ENCODE measurements at regions of chr10 and their contacts with region 1.

Region 1: DNA sequence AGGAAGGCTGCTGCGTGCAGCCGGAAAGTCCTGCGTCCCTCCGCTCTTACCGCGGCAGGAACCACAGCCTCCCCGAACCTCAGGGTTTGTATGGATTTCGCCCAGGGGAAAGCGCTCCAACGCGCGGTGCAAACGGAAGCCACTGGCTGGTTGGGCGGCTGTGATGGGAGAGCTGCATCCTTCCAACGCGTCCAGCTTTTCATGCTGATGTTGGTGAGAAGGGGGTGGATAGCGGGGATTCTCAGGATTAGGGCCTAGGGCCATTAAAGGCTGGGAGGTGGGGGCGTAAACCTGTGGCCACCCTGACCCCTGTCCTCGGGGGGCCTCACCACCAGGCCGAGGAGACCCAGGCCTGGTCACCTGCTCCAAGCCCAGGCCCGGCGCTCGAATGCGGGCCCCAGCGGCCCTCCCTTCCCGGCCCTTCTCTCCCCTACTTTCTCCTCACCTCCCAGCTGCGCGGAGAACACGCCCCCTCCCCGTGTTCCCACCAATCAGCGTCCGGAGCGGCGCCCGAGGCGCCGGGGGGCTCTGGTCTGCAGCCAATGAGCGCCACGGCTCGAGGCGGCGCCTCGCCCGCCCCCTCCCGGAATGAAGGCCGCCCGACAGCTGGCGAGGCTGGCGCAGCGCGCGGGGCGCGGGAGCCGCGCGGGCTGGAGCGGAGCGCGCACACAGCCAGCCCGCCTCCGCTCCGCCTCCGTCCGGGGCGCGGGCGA is 458 bp upstream of the NANOS1 start:
- DNase-seq: peak; percentile 88 to 95
- H3K4me3 ChIP-seq: peak overlapping the region; percentile 34 to 59 (median 47)
- H3K27ac ChIP-seq: no peak overlapping the region
- H3K4me1 ChIP-seq: peaks cover 0 to 3% (median 1%) of the 10 kb centered on the region in 4 experiments; a peak in 4 of 7 replicates
- H3K27me3 ChIP-seq: no peaks in the 10 kb centered on the region
- CTCF ChIP-seq: peak; percentile 6 to 30 (median 6); a peak in 3 of 4 replicates
- EP300 ChIP-seq: no peak
- POLR2A ChIP-seq: 0 out of 3 replicates have a peak, but pooled peaks of 1 of the 2 experiments have one; percentile 46
- RAD21 ChIP-seq: peak in 1 of 2 experiments; percentile 22; a peak in 1 of 4 replicates

Region 2: GRCh38 chr10:118754720-118755480 is 274.2 kb before region 1 on chr10 and contains the start of gene CACUL1:
- CTCF ChIA-PET with region 1: no interaction called
- POLR2A ChIA-PET with region 1: interaction called, 13 read pairs
- DNase-seq: peak; percentile 99
- H3K4me3 ChIP-seq: peak within 1 kb of the TSS; percentile 84 to 97 (median 94)
- H3K27ac ChIP-seq: peak within 1 kb of the TSS; percentile 90
- H3K4me1 ChIP-seq: no peaks in the 10 kb centered on the region; a peak in 2 of 7 replicates
- H3K27me3 ChIP-seq: 0 out of 7 replicates have a peak, but pooled peaks cover 0 to under 1% (median 0%) of the 10 kb centered on the region in 4 experiments
- CTCF ChIP-seq: no peak
- EP300 ChIP-seq: no peak
- POLR2A ChIP-seq: peak; percentile 81 to 95
- RAD21 ChIP-seq: no peak
- total RNA-seq, gene CACUL1: 34.2 and 43.9 TPM in 2 replicates

Region 3: GRCh38 chr10:118875087-118875486 is 154.0 kb before region 1 on chr10:
- CTCF ChIA-PET with region 1: no interaction called
- POLR2A ChIA-PET with region 1: no interaction called
- DNase-seq: no peak
- H3K4me3 ChIP-seq: no peak overlapping the region
- H3K27ac ChIP-seq: no peak overlapping the region
- H3K4me1 ChIP-seq: peaks cover 0 to 3% (median 1%) of the 10 kb centered on the region in 4 experiments; a peak in 3 of 7 replicates
- H3K27me3 ChIP-seq: no peaks in the 10 kb centered on the region
- CTCF ChIP-seq: no peak
- EP300 ChIP-seq: no peak
- POLR2A ChIP-seq: no peak
- RAD21 ChIP-seq: no peak

Region 4: DNA sequence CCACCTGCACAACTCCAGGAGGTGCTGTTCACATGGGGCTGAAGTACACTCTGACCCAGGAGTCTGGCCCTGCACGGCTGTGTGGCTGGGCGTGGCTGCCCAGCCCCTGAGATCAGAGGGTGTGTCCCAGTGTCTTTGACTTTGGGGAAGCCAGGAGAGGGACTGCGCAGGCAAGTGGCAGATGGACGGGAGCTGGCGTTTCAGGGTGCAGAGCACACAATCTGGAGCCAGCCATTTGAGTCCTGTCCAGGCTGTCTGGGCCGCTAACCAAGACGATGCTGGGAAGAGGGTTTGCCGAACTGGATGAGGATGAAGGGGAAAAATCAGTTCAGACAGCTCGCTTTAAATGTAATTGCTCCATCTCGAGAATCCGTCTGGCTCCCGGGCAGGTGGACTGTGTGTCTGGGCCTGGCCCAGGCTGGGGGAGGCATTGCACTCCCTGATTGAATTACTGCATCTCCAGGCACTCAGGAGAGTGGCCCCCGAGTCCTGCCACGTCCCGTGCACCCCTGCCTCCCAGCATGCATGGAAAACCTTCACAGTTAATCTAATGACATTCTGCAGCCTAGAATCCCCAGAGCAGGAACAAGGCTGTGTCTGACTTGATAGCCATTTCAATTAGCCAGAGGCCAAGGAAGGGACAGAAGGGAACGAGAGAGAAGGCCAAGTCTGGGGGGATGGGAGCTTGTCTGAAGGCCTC is 120.3 kb before region 1 on chr10:
- CTCF ChIA-PET with region 1: no interaction called
- POLR2A ChIA-PET with region 1: no interaction called
- DNase-seq: no peak
- H3K4me3 ChIP-seq: no peak overlapping the region
- H3K27ac ChIP-seq: no peak overlapping the region
- H3K4me1 ChIP-seq: peaks cover 0 to under 1% (median 0%) of the 10 kb centered on the region in 4 experiments; a peak in 1 of 7 replicates
- H3K27me3 ChIP-seq: no peaks in the 10 kb centered on the region
- CTCF ChIP-seq: no peak
- EP300 ChIP-seq: no peak
- POLR2A ChIP-seq: no peak
- RAD21 ChIP-seq: no peak

Region 5: GRCh38 chr10:119001717-119002500 is 27.1 kb before region 1 on chr10:
- CTCF ChIA-PET with region 1: no interaction called
- POLR2A ChIA-PET with region 1: no interaction called
- DNase-seq: no peak
- H3K4me3 ChIP-seq: no peak overlapping the region
- H3K27ac ChIP-seq: no peak overlapping the region; the same call in 1 of the 2 replicates
- H3K4me1 ChIP-seq: no peaks in the 10 kb centered on the region; a peak in 1 of 7 replicates
- H3K27me3 ChIP-seq: no peaks in the 10 kb centered on the region
- CTCF ChIP-seq: no peak
- EP300 ChIP-seq: no peak
- POLR2A ChIP-seq: no peak
- RAD21 ChIP-seq: no peak

Region 6: DNA sequence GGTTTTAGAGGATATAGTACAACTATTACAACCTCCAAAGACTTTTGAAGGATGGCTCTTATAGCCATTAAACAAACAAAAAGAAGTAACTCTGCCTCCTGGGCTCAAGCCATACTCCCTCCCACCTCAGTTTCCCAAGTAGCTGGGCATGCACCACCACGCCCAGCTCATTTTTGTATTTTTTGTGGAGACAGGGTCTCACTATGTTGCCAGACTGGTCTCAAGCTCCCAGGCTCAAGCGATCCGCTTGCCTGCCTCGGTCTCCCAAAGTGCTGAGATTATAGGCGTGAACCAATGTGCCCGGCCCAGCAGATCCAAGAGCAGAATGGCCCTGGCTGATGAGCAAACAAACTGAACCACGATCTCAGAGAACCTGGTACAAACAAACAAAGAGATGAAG is 16.5 kb after region 1 on chr10:
- CTCF ChIA-PET with region 1: no interaction called
- POLR2A ChIA-PET with region 1: interaction called, 13 read pairs
- DNase-seq: no peak
- H3K4me3 ChIP-seq: no peak overlapping the region
- H3K27ac ChIP-seq: no peak overlapping the region
- H3K4me1 ChIP-seq: no peaks in the 10 kb centered on the region
- H3K27me3 ChIP-seq: no peaks in the 10 kb centered on the region
- CTCF ChIP-seq: no peak
- EP300 ChIP-seq: no peak
- POLR2A ChIP-seq: no peak
- RAD21 ChIP-seq: no peak

Region 7: GRCh38 chr10:119051775-119052174 is 22.7 kb after region 1 on chr10:
- CTCF ChIA-PET with region 1: no interaction called
- POLR2A ChIA-PET with region 1: interaction called, 13 read pairs
- DNase-seq: no peak
- H3K4me3 ChIP-seq: no peak overlapping the region
- H3K27ac ChIP-seq: no peak overlapping the region
- H3K4me1 ChIP-seq: no peaks in the 10 kb centered on the region
- H3K27me3 ChIP-seq: no peaks in the 10 kb centered on the region
- CTCF ChIP-seq: no peak
- EP300 ChIP-seq: no peak
- POLR2A ChIP-seq: peak in 1 of 2 experiments; percentile 33; a peak in 1 of 3 replicates
- RAD21 ChIP-seq: no peak

Region 8: GRCh38 chr10:119080521-119081260 is 51.6 kb after region 1 on chr10 and contains the start of gene EIF3A:
- CTCF ChIA-PET with region 1: no interaction called
- POLR2A ChIA-PET with region 1: interaction called, 30 read pairs
- DNase-seq: peak; percentile 71 to 94
- H3K4me3 ChIP-seq: peak within 1 kb of the TSS; percentile 77 to 96 (median 90)
- H3K27ac ChIP-seq: peak within 1 kb of the TSS; percentile 97
- H3K4me1 ChIP-seq: peaks cover 0 to 3% (median 0%) of the 10 kb centered on the region in 4 experiments; a peak in 2 of 7 replicates
- H3K27me3 ChIP-seq: no peaks in the 10 kb centered on the region
- CTCF ChIP-seq: no peak
- EP300 ChIP-seq: no peak
- POLR2A ChIP-seq: peak; percentile 93
- RAD21 ChIP-seq: no peak
- total RNA-seq, gene EIF3A: 209 and 210 TPM in 2 replicates

Region 9: GRCh38 chr10:119103903-119104652 is 75.0 kb after region 1 on chr10 and contains the start of gene DENND10:
- CTCF ChIA-PET with region 1: no interaction called
- POLR2A ChIA-PET with region 1: interaction called, 10 read pairs
- DNase-seq: peak; percentile 47 to 83
- H3K4me3 ChIP-seq: peak within 1 kb of the TSS; percentile 68 to 93 (median 88)
- H3K27ac ChIP-seq: peak within 1 kb of the TSS; percentile 58; the same call in 1 of the 2 replicates
- H3K4me1 ChIP-seq: peaks cover 0 to 3% (median 0%) of the 10 kb centered on the region in 4 experiments; a peak in 1 of 7 replicates
- H3K27me3 ChIP-seq: no peaks in the 10 kb centered on the region
- CTCF ChIP-seq: no peak
- EP300 ChIP-seq: no peak
- POLR2A ChIP-seq: peak; percentile 90 to 91
- RAD21 ChIP-seq: no peak
- total RNA-seq, gene DENND10: 61.6 and 64.4 TPM in 2 replicates

Region 10: DNA sequence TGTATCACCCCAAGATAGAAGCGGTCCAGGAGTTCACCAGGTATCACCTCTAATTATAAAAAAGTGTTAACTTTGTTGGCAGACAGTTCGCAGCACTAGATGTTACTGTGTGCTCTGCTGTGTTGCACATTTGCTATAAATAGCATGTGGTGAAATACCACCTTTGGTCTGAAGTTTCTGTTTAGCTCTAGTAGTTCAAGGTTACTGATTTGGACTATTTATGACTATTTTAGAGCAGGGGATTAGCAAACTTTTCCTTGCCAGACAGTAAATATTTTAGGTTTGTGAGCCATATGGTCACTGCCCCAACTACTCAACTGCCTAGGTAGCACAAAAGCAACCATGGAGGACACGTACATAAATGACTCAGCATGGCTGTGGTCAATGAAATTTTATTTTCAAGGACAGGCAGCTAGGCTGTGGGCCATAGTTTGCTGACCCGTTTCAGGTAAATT is 91.4 kb after region 1 on chr10:
- CTCF ChIA-PET with region 1: no interaction called
- POLR2A ChIA-PET with region 1: no interaction called
- DNase-seq: no peak
- H3K4me3 ChIP-seq: no peak overlapping the region
- H3K27ac ChIP-seq: no peak overlapping the region
- H3K4me1 ChIP-seq: no peaks in the 10 kb centered on the region
- H3K27me3 ChIP-seq: no peaks in the 10 kb centered on the region
- CTCF ChIP-seq: no peak
- EP300 ChIP-seq: no peak
- POLR2A ChIP-seq: no peak
- RAD21 ChIP-seq: no peak